Aorta (tissue), 5 donors: ENCODE measurements at regions of chr17 and their contacts with region 1.

Region 1: GRCh38 chr17:68101075-68101992 is 65.8 kb downstream of the KPNA2 start:
- DNase-seq: peak; percentile 98 to 99
- ATAC-seq: peak; percentile 99
- H3K4me3 ChIP-seq: peak overlapping the region; percentile 74 to 82
- H3K27ac ChIP-seq: peak overlapping the region in 1 of 2 donors; percentile 1
- H3K4me1 ChIP-seq: no peaks in the 10 kb centered on the region
- H3K27me3 ChIP-seq: no peaks in the 10 kb centered on the region

Region 2: GRCh38 chr17:68205251-68205807 is 104.0 kb after region 1 on chr17:
- intact Hi-C with region 1: loop called in 1 of 2 experiments (anchors 10 kb)
- DNase-seq: peak; percentile 96 to 98
- ATAC-seq: peak; percentile 96
- H3K4me3 ChIP-seq: peak overlapping the region; percentile 72 to 84
- H3K27ac ChIP-seq: no peak overlapping the region
- H3K4me1 ChIP-seq: peaks cover 0 to 2% of the 10 kb centered on the region in 2 donors
- H3K27me3 ChIP-seq: no peaks in the 10 kb centered on the region